CD8-positive, alpha-beta memory T cell (primary cell): ENCODE measurements at regions of chr12 and their contacts with region 1.

Region 1: GRCh38 chr12:123983822-123984485 is 10.9 kb downstream of the ZNF664 start:
- DNase-seq: peak; percentile 11 to 65 (median 33)
- H3K4me3 ChIP-seq: no peak overlapping the region
- H3K4me3 Mint-ChIP-seq: no peak overlapping the region
- H3K27ac ChIP-seq: no peak overlapping the region
- H3K27ac Mint-ChIP-seq: peak overlapping the region in 3 of 8 donors; percentile 4 to 75 (median 6)
- H3K4me1 ChIP-seq: no peaks in the 10 kb centered on the region
- H3K4me1 Mint-ChIP-seq: peaks cover 15 to 42% (median 28%) of the 10 kb centered on the region in 3 donors
- H3K27me3 ChIP-seq: no peaks in the 10 kb centered on the region
- H3K27me3 Mint-ChIP-seq: no peaks in the 10 kb centered on the region

Region 2: GRCh38 chr12:123905319-123905925 is 78.5 kb before region 1 on chr12:
- CTCF ChIA-PET with region 1: interaction called, 88 read pairs
- POLR2A ChIA-PET with region 1: no interaction called
- DNase-seq: peak; percentile 44 to 71 (median 54)
- H3K4me3 ChIP-seq: no peak overlapping the region
- H3K4me3 Mint-ChIP-seq: no peak overlapping the region
- H3K27ac ChIP-seq: no peak overlapping the region
- H3K27ac Mint-ChIP-seq: peak overlapping the region in 2 of 8 donors; percentile 3 to 4
- H3K4me1 ChIP-seq: no peaks in the 10 kb centered on the region
- H3K4me1 Mint-ChIP-seq: peaks cover 4 to 9% (median 7%) of the 10 kb centered on the region in 3 donors
- H3K27me3 ChIP-seq: no peaks in the 10 kb centered on the region
- H3K27me3 Mint-ChIP-seq: peaks cover 3 to 31% of the 10 kb centered on the region in 2 donors

Region 3: GRCh38 chr12:123912415-123913380 is 71.3 kb before region 1 on chr12:
- CTCF ChIA-PET with region 1: interaction called, 12 read pairs
- POLR2A ChIA-PET with region 1: no interaction called
- DNase-seq: no peak
- H3K4me3 ChIP-seq: no peak overlapping the region
- H3K4me3 Mint-ChIP-seq: no peak overlapping the region
- H3K27ac ChIP-seq: no peak overlapping the region
- H3K27ac Mint-ChIP-seq: peak overlapping the region in 3 of 8 donors; percentile 25 to 72 (median 52)
- H3K4me1 ChIP-seq: no peaks in the 10 kb centered on the region
- H3K4me1 Mint-ChIP-seq: peaks cover 14 to 21% (median 17%) of the 10 kb centered on the region in 3 donors
- H3K27me3 ChIP-seq: no peaks in the 10 kb centered on the region
- H3K27me3 Mint-ChIP-seq: peaks cover 1 to 6% of the 10 kb centered on the region in 2 donors